ENCODE measurements at regions of chr16 and their contacts with region 1.

Region 1: GRCh38 chr16:66872943-66873684 is 7.2 kb upstream of the PDP2 start:
- DNase-seq: peak; percentile 93
- H3K4me3 Mint-ChIP-seq: peak overlapping the region; percentile 62
- H3K27ac Mint-ChIP-seq: peak overlapping the region; percentile 81
- H3K4me1 Mint-ChIP-seq: peaks cover 38% of the 10 kb centered on the region
- H3K27me3 Mint-ChIP-seq: no peaks in the 10 kb centered on the region

Region 2: DNA sequence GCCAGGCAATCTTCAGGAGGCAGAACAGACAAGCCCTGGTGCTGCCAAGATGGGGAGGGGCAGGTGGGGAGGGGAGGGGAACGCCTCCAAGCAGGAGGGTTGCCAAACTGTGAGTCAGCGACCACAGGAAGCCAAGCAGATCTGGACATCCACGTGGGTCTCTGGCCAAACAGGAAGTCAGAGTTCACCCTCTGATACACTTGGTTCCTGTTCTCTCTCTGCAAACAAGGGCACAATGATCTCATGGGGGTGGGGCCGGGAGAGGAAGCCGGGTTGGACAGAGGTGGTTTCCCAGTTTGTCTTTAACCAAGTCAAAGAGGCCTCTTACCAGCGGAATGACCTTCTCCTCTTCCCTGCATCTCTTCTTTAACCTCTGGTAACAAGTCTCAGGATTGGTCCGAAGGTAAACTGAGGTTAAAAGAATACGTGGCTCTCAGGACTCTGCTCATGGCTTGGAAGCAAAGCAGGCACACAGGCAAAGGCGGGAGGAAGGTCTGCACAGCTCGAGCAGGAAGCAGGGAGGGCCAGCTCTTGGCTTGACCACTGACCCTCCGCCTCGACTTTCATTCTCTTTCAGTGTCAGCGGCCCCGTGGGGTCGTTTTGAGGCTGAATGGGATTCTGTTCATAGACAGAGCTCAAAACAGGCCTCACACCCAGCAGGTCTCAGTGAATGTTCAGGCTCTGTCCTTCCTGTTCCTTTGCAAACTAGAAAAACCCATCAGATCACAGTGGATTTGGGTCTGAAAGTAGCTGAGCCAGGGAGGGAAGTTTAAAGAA is 356.1 kb before region 1 on chr16:
- CTCF ChIA-PET with region 1: no interaction called
- intact Hi-C with region 1: loop called (anchors 1 kb)
- DNase-seq: peak; percentile 96
- H3K4me3 Mint-ChIP-seq: peak overlapping the region; percentile 68
- H3K27ac Mint-ChIP-seq: peak overlapping the region; percentile 93
- H3K4me1 Mint-ChIP-seq: peaks cover 60% of the 10 kb centered on the region
- H3K27me3 Mint-ChIP-seq: no peaks in the 10 kb centered on the region

Region 3: GRCh38 chr16:66608241-66609138 is 264.6 kb before region 1 on chr16:
- CTCF ChIA-PET with region 1: interaction called, 4 read pairs
- intact Hi-C with region 1: loop called (anchors 1 kb)
- DNase-seq: peak; percentile 89
- H3K4me3 Mint-ChIP-seq: no peak overlapping the region
- H3K27ac Mint-ChIP-seq: no peak overlapping the region
- H3K4me1 Mint-ChIP-seq: peaks cover 33% of the 10 kb centered on the region
- H3K27me3 Mint-ChIP-seq: no peaks in the 10 kb centered on the region

Region 4: DNA sequence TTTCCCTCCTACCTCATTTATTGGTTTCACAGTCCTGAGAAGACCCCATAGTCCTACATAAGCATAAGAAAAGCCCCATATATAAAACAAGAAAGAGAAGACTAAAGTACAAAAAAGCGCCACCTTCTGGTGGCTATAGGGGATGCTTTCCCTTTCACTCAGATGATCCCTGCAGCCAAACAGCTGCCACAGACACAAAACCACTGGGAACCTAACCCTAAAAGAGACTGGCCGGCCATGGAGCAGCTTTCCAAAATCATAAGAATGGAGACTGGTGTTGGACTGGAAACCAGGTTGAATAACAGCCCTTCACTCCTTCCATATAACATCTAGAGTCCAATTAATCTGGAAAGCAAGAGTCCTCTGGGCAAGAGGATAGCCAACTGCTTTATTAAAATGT is 133.1 kb before region 1 on chr16:
- CTCF ChIA-PET with region 1: interaction called, 21 read pairs
- intact Hi-C with region 1: no loop called
- DNase-seq: peak; percentile 50
- H3K4me3 Mint-ChIP-seq: no peak overlapping the region
- H3K27ac Mint-ChIP-seq: no peak overlapping the region
- H3K4me1 Mint-ChIP-seq: peaks cover 12% of the 10 kb centered on the region
- H3K27me3 Mint-ChIP-seq: no peaks in the 10 kb centered on the region

Region 5: DNA sequence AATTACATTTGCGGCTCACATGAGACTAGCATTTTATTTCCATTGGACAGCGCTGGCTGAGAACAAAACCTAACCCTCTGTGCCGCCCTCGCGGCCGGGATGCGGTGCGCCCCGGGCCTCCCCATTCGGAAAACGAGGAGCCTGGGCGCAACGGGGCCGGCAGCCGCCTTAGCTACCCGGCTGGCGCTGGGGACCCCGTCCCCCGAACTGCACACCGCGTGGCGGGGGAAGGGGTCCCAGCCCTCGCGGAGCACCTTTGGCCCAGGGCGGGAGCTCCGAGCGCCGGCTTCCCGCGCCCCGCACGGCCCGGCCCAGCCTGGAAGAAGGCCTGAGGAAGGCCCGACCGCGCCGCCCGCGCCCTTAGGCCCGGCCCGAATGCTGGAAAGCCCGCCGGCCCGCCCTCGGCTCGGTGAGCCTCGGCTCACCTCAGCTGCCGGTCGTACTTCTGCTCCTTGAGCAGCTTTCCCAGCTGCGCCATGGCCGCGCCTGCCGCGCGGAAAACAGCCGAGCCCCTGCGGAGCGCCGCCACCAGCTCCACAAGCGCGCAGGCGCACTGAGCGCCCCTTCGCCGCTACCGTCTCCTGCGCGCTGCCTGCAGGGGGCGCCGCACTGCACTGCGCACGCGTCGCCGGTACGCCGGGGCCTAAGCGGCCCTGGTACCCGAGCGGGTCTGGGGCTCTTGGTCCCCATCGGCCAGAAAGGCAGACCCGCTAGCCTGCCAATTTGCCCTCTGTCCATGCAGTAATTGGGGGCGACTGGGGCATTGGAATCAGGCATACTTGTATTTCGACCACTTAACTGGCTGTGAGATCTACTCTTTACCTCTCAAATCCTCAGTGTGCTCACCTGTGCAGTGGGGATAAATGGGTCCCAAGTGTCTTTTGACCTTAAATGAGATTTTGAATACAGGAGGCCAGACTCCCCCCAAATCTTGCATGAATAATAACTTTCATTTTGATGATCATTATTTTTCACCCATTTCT is 42.4 kb before region 1 on chr16 and contains the start of gene NAE1:
- CTCF ChIA-PET with region 1: interaction called, 132 read pairs
- intact Hi-C with region 1: loop called (anchors 1 kb)
- DNase-seq: peak; percentile 87
- H3K4me3 Mint-ChIP-seq: peak within 1 kb of the TSS; percentile 74
- H3K27ac Mint-ChIP-seq: no peak within 1 kb of the TSS
- H3K4me1 Mint-ChIP-seq: peaks cover 32% of the 10 kb centered on the region
- H3K27me3 Mint-ChIP-seq: no peaks in the 10 kb centered on the region
- total RNA-seq, gene NAE1: 108 to 115 TPM

Region 6: DNA sequence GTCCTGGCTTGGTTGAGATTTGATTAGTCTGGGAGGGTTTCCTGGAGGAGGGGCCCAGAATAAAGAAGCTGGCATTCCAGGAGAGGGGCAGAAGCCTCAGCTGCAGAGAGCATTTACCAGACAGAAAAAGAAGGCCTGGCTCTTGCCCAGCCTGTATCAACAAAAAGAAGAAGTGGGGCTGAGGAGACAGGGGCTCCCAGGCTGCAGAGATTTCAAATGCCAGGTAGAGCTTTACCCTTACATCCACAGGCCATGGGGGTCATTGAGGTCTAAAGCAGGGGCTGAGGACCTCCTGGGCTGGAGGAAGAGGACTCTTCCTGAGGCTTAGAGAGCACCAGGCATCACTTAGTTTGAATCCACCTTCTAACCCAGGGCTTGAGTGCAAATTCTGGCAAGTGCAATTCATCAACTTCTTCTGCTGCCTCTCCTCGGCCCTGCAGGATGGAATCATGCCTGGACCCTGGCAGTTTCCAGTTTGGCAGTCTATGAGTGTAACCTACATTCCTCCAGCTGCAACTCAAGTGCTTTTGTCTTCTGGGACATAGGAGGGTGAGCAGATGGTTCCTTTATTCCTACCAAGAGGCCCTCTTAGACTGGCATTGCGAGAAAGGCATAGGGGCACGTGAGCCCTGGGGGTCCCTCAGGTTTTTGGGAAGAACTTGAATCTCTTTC is 13.6 kb before region 1 on chr16:
- CTCF ChIA-PET with region 1: interaction called, 18 read pairs
- intact Hi-C with region 1: no loop called
- DNase-seq: no peak
- H3K4me3 Mint-ChIP-seq: no peak overlapping the region
- H3K27ac Mint-ChIP-seq: no peak overlapping the region
- H3K4me1 Mint-ChIP-seq: no peaks in the 10 kb centered on the region
- H3K27me3 Mint-ChIP-seq: no peaks in the 10 kb centered on the region

Region 7: DNA sequence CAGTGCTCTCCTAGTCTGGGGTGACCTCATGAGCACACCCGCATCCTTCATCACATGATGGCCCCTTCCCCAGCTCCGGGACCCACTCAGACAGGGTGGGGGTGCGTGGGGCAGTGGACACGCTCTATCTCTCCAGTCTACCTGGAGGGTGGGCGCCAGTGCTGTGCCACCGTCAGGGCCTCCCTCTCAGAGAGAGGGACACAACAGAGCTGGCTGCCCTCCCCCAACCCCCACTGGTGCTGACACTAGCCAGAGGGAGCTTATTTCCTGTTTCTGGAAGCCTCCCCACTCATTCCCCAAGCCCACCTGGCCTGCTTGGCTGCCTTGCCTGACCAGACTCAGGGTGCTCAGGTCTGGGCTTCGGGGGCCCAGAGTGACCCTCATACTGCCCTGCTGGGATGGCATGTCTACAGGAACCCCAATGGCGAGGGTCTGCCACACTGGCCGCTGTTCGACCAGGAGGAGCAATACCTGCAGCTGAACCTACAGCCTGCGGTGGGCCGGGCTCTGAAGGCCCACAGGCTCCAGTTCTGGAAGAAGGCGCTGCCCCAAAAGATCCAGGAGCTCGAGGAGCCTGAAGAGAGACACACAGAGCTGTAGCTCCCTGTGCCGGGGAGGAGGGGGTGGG is 70.4 kb after region 1 on chr16:
- CTCF ChIA-PET with region 1: no interaction called
- intact Hi-C with region 1: no loop called
- DNase-seq: no peak
- H3K4me3 Mint-ChIP-seq: no peak overlapping the region
- H3K27ac Mint-ChIP-seq: no peak overlapping the region
- H3K4me1 Mint-ChIP-seq: peaks cover 10% of the 10 kb centered on the region
- H3K27me3 Mint-ChIP-seq: peaks cover 5% of the 10 kb centered on the region

Measured in activated naive CD4-positive, alpha-beta T cell treated with anti-CD3 and anti-CD28 coated beads for 36 hours (primary cell).